HepG2 (cell line): ENCODE measurements at regions of chr17 and their contacts with region 1.

Region 1: DNA sequence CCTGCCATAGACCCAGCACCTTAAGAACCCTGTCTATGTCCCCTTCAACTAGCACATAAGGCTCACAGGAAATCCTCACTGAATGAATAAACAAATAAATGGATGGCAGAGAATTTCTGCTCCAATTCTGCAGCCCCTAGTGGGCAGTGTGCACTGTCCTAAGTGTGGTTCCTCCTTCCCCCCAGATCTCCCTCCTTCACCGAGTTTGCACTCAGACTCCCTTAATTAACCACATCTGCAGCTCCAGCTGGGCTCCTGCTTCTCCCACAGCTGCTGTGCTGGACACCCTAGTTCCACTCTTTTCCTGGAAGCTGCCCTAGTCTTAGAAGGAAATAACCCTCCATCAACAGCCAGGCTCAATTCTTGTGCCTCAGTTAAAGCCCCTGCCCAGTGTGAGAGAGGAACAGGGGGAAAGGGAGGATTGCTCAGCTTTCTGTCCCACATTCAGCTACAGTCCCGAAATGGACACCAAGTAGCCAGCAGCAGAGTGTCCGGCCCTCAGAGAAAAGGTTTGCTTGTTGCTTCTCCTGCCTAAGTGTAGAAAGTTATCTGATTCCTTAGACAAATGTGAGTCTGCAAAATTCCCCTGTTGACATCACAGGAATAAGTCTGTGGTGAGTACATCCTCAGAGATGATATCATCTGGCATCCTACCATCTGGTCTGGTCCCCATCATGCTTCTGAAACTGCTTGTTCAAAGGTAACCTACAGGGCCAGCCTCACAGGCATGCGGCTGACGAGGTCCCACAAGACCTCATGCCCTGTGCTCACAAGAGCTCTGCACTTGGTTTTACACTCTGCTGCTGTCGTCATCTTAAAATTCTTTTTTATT is 12.3 kb downstream of the LRRC3C start:
- DNase-seq: no peak
- ATAC-seq: peak; percentile 56
- H3K4me3 ChIP-seq: no peak overlapping the region
- H3K27ac ChIP-seq: no peak overlapping the region
- H3K4me1 ChIP-seq: peaks cover 52% of the 10 kb centered on the region
- H3K27me3 ChIP-seq: peaks cover 13 to 19% of the 10 kb centered on the region in 2 experiments; a peak in 3 of 5 replicates
- CTCF ChIP-seq: peak; percentile 57
- EP300 ChIP-seq: no peak
- POLR2A ChIP-seq: no peak
- RAD21 ChIP-seq: peak; percentile 40; the same call in 1 of the 2 replicates

Region 2: DNA sequence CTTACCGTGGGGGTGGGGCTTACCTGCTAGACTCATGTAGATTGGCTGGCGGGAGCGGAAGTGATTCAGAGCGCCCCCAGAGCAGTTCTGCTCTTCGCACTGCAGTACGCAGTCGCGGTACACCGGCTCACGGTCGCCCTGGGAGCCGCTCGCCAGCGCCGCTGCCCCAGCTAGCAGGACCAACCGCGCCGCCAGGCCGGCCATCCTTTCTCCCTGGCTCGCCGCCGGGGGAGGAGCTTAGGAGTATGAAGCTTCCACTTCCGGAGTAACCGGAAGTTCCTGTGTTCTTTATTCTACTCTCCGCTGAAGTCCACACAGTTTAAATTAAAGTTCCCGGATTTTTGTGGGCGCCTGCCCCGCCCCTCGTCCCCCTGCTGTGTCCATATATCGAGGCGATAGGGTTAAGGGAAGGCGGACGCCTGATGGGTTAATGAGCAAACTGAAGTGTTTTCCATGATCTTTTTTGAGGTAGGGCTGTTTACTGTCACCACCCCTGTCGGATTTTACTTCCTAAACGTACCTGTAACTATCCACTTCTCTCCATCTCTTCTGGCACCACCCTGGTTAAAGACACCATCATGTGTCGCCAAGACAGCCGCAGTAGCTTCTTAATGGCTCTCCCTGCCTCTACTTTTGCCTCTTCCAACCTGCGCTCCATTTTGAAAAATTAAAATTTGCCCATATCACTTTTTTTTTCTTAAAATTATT is 251.8 kb before region 1 on chr17 and contains the start of gene PGAP3:
- CTCF ChIA-PET with region 1: no interaction called
- POLR2A ChIA-PET with region 1: no interaction called
- in situ Hi-C with region 1: no loop called
- intact Hi-C with region 1: no loop called
- DNase-seq: peak; percentile 95
- ATAC-seq: peak; percentile 95
- H3K4me3 ChIP-seq: peak within 1 kb of the TSS; percentile 72 to 76 (median 74)
- H3K27ac ChIP-seq: peak within 1 kb of the TSS; percentile 88
- H3K4me1 ChIP-seq: peaks cover 31% of the 10 kb centered on the region
- H3K27me3 ChIP-seq: no peaks in the 10 kb centered on the region; a peak in 1 of 5 replicates
- CTCF ChIP-seq: peak; percentile 65
- EP300 ChIP-seq: peak in 1 of 2 experiments; percentile 46; a peak in 2 of 4 replicates
- POLR2A ChIP-seq: peak; percentile 78 to 86
- RAD21 ChIP-seq: peak; percentile 54; the same call in 1 of the 2 replicates
- total RNA-seq, gene PGAP3: 5.1 and 11.9 TPM in 2 replicates

Region 3: DNA sequence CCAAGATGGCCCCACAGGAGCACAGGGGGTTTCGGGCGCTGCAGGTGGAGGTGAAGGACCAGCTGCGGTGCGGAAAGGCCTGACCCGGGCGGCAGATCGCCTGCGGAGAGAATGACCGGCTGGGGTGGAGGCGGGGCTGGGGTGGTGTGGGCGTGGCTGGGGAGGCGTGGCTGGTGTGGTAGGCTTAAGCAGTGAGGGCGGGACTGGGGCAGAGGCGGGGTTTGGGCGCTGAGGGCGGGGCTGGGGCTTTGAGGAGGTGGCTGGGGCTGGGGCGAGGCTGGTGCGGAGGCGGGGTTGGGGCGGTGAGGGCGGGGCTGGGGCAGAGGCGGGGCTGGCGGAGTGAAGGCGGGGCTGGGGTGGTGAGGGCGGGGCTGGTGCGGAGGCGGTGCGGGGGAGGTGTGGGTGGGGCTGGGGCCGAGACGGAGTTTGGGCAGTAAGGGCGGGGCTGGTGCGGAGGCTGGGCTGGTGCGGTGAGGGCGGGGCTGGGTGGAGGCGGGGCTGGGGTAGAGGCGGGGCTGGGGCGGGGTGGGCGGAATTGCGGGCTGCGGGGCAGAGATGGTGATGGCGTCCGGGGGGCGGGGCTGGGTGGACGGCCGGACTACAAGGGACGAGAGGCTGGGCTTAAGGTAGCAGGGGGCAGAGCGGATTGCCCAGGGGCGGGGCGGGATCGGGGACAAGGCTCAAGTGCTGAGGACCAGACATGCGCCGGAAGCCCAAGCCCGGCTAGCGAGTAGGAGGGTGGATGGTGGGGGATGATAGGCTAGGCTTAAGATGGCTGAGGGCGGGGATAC is 13.1 kb after region 1 on chr17:
- CTCF ChIA-PET with region 1: no interaction called
- POLR2A ChIA-PET with region 1: no interaction called
- in situ Hi-C with region 1: no loop called
- intact Hi-C with region 1: loop called (anchors 2 kb)
- DNase-seq: peak; percentile 94
- ATAC-seq: peak; percentile 92
- H3K4me3 ChIP-seq: peak overlapping the region; percentile 48 to 79 (median 51)
- H3K27ac ChIP-seq: no peak overlapping the region
- H3K4me1 ChIP-seq: peaks cover 64% of the 10 kb centered on the region
- H3K27me3 ChIP-seq: peaks cover under 1 to 11% of the 10 kb centered on the region in 2 experiments; a peak in 3 of 5 replicates
- CTCF ChIP-seq: no peak
- EP300 ChIP-seq: no peak
- POLR2A ChIP-seq: peak in 1 of 2 experiments; percentile 77; a peak in 2 of 4 replicates
- RAD21 ChIP-seq: no peak

Region 4: DNA sequence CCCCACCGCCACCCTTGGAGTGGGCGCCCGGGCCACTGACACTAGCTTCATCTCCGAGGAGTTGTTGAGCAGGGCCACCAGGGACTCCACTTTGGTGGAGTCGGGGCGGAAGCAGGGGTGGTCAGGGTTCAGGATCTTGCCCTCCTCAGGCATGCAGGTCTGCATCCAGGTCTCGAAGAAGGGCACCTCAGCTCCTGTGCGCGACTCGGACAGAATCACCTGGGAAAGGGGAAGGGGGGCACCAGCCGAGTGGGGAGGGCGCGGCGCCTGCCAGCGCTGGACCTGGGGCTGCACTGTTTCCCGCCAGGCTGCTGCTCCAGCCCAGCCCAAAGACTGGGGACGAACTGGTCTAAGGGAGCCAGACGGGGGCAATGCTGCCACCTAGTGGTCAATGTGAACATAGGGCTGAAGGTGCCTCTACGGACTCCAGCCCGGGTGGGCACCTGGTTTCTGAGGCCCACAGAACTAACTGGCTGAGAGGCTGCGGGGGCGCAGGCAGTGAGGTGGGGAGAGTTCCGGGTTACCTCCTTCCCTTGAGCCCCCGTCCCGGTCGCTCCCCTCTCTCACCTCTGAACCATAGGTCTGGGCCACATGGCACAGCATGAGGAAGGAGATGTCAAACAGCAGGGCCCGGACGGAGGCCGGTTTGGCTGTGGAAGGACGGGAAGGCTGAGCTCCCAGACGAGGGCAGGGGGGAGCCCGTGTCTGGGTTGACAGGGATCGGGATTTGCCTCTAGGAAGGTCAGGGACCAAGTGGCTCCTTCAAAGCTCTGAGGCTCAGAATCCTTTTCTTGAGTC is 87.2 kb after region 1 on chr17:
- CTCF ChIA-PET with region 1: no interaction called
- POLR2A ChIA-PET with region 1: no interaction called
- in situ Hi-C with region 1: no loop called
- intact Hi-C with region 1: no loop called
- DNase-seq: peak; percentile 82
- ATAC-seq: peak; percentile 97
- H3K4me3 ChIP-seq: no peak overlapping the region
- H3K27ac ChIP-seq: no peak overlapping the region
- H3K4me1 ChIP-seq: no peaks in the 10 kb centered on the region
- H3K27me3 ChIP-seq: no peaks in the 10 kb centered on the region
- CTCF ChIP-seq: peak; percentile 98
- EP300 ChIP-seq: no peak
- POLR2A ChIP-seq: no peak
- RAD21 ChIP-seq: peak; percentile 77